Lower leg skin (tissue), 4 donors: ENCODE measurements at regions of chr2 and their contacts with region 1.

Region 1: GRCh38 chr2:228180181-228181097 is 1.0 kb downstream of the SPHKAP start:
- DNase-seq: no peak
- H3K4me3 ChIP-seq: no peak overlapping the region
- CTCF ChIP-seq: no peak
- POLR2A ChIP-seq: no peak

Region 2: DNA sequence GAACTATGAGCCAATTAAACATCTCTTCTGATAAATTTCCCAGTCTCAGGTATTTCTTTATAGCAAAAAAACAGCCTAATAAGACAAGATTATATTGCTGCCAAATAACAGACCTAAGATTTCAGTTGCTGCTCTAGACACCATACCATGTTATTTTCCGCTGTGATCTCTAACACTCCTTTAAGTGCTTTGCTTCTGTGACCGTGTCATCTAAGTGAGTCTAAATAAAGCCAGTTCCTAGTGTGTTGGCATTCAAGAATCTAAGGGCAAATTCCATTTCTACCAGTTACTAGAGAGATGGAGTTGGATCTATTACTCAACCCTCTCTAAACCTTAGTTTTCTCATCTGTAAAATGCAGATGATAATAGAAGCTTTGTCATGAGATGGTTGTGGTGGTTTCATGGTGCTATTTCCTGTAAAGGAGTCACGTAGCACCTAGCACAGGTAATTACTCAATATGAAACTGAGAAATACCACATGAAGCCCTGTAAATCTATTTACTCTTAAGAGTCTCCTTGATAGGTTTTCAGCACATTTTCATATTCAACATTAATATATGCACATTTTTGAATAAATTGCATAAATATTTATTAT is 39.4 kb before region 1 on chr2:
- intact Hi-C with region 1: loop called (anchors 2 kb)
- DNase-seq: no peak
- H3K4me3 ChIP-seq: no peak overlapping the region
- CTCF ChIP-seq: no peak
- POLR2A ChIP-seq: no peak